ENCODE measurements at regions of chr21 and their contacts with region 1.

Region 1: GRCh38 chr21:45995686-45996179 is 14.2 kb downstream of the COL6A1 start:
- DNase-seq: peak; percentile 15 to 49
- H3K4me3 ChIP-seq: no peak overlapping the region
- H3K27ac ChIP-seq: peak overlapping the region in 1 of 2 donors; percentile 88
- H3K4me1 ChIP-seq: no peaks in the 10 kb centered on the region
- H3K27me3 ChIP-seq: no peaks in the 10 kb centered on the region
- CTCF ChIP-seq: no peak
- POLR2A ChIP-seq: no peak

Region 2: DNA sequence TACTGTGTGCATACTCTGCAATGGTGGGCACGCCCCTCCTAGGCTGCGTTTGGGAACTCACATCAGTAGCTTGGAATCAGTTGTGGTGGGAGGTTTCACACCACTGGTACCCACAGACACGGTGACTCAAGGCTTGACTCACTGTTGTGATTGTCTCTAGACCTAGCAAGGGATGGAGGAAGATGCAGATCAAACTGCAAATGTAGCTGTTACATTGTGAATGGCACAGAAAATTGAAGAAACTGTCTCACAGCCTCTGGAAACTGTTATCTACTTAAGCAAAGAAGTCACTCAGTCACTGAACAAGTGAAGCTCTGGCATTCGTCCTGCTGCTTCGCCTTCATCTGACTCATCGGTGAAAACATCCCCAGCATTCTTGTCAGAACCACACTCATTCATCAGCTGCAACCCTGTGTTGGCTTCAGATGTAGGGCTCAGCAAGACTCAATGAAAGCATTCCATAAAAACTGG is 767.5 kb before region 1 on chr21:
- intact Hi-C with region 1: no loop called
- DNase-seq: peak in 1 of 2 donors; percentile 49
- H3K4me3 ChIP-seq: no peak overlapping the region
- H3K27ac ChIP-seq: no peak overlapping the region
- H3K4me1 ChIP-seq: no peaks in the 10 kb centered on the region
- H3K27me3 ChIP-seq: no peaks in the 10 kb centered on the region
- CTCF ChIP-seq: no peak
- POLR2A ChIP-seq: no peak

Region 3: DNA sequence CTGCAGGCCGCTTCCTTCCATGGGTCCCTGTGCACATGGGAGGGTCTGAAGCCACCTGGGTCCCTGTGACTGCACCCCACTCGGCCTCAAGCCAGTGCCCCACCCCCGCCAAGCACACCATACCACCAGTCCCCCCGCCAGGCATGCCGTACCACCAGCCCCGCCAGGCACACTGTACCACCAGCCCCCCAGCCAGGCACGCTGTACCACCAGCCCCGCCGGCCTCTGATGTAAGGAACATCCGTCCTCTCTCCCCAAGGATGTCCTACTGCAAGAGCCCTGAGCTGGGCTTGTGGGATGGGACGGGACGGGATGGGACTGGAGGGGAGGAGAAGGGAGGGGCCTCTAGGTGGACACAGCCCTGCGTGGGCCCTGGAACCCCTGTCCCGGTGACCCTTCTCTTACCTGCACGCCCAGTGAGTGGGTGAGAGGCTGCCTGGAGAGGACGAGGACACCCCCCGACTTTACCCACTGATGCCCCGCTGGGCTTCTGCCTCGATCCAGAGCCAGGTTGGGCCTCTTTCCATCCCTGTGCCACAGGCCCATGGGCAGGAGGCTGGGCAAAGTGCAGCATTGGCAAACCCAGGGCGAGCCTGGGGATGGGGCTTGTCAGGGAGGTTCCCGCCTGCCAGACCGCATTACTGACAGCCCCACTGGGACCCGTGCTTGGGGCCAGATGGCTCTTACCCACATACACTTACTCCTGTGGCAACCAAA is 55.0 kb before region 1 on chr21:
- intact Hi-C with region 1: no loop called
- DNase-seq: no peak
- H3K4me3 ChIP-seq: no peak overlapping the region
- H3K27ac ChIP-seq: no peak overlapping the region
- H3K4me1 ChIP-seq: no peaks in the 10 kb centered on the region
- H3K27me3 ChIP-seq: no peaks in the 10 kb centered on the region
- CTCF ChIP-seq: no peak
- POLR2A ChIP-seq: no peak

Region 4: DNA sequence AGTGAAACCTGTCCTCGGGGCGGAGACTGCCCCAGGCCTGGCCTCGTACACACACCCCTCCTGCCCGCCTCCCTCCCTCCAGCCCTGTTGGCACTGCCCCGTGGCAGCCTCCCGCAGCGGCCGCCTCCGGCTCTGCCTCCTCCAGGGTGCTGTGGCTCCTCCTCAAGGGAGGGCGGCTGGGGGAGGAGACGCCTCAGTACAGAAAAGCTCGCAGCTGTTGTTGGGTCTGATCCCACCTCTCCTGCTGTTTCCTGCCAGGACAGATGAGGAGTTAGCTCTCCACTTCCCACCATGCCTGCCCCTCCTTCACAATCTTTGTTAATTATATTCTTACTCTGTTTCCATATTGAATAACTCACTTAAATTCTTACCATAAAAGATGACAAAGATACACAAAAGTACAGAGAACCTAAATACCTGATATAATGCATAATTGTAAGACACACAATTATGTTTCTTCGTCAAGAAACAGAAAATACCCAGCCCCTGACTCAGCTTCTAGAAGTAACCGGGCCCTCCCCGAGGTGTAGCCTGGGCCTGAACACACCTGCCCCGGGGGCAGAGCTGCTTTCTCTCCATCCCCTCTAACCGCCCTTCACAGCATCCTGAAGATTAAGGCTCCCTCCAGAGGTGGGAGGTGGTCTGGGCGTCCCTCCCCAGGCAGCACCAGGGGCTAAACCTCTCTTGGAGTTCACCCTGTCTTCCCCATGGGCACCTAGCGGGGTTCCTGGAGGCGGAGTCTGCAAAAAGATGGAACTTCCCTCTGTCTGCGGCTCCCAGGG is 44.8 kb before region 1 on chr21:
- intact Hi-C with region 1: loop called (anchors 1 kb)
- DNase-seq: peak in 1 of 2 donors; percentile 67
- H3K4me3 ChIP-seq: peak overlapping the region in 2 of 3 donors; percentile 35 to 60
- H3K27ac ChIP-seq: peak overlapping the region; percentile 48 to 91
- H3K4me1 ChIP-seq: peaks cover 3 to 12% of the 10 kb centered on the region in 2 donors
- H3K27me3 ChIP-seq: peaks cover 0 to 5% of the 10 kb centered on the region in 2 donors
- CTCF ChIP-seq: no peak
- POLR2A ChIP-seq: no peak

Region 5: DNA sequence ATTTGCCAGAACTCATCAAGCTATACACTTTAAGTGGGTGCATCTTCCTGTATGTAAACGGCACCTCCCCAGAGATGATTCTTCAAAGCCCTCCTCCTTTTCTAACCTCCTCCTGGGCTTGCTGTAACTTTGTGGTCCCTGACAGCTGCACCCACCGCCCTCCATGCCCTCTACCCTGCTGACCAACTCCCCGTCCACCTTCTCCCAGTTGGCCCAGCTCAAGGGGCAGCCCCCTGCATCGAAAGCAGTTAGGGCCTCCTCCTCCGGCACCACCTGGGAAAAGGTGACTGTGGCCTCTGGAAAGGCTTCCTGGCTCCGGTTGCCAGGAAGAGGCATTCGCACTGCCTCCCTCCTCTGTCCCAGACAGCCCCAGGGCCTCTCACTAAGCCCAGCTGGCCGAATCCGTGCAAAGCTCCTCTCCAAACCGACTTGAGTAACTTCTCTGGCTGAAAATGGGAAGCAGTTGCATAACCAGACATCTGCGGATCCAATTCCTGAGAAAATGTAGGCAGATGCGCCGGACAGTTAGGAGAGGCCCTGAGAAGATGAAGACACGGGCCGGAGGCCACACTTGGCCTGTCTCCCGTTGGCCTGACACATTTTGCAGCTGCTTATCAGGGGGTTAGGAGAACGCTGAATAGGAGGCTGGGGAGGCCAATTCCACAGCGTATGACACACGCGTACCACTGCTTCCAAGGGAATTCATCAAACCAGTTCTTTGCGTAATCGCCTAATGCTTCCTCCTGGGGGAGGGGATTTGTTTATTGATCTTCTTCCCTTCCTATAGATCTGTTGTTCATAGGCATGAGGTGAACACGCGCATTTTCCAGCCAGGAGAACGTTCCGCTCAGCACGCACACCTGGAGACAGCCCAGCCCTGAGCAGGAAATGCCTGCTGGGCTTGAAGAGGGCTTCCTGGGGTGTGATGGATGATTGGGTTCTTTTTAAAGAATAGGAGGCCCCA is 53.5 kb after region 1 on chr21:
- intact Hi-C with region 1: no loop called
- DNase-seq: peak; percentile 69 to 87
- H3K4me3 ChIP-seq: peak overlapping the region in 1 of 3 donors; percentile 41
- H3K27ac ChIP-seq: peak overlapping the region; percentile 87 to 96
- H3K4me1 ChIP-seq: peaks cover 9 to 12% of the 10 kb centered on the region in 2 donors
- H3K27me3 ChIP-seq: peaks cover 0 to 2% of the 10 kb centered on the region in 2 donors
- CTCF ChIP-seq: no peak
- POLR2A ChIP-seq: no peak

Region 6: DNA sequence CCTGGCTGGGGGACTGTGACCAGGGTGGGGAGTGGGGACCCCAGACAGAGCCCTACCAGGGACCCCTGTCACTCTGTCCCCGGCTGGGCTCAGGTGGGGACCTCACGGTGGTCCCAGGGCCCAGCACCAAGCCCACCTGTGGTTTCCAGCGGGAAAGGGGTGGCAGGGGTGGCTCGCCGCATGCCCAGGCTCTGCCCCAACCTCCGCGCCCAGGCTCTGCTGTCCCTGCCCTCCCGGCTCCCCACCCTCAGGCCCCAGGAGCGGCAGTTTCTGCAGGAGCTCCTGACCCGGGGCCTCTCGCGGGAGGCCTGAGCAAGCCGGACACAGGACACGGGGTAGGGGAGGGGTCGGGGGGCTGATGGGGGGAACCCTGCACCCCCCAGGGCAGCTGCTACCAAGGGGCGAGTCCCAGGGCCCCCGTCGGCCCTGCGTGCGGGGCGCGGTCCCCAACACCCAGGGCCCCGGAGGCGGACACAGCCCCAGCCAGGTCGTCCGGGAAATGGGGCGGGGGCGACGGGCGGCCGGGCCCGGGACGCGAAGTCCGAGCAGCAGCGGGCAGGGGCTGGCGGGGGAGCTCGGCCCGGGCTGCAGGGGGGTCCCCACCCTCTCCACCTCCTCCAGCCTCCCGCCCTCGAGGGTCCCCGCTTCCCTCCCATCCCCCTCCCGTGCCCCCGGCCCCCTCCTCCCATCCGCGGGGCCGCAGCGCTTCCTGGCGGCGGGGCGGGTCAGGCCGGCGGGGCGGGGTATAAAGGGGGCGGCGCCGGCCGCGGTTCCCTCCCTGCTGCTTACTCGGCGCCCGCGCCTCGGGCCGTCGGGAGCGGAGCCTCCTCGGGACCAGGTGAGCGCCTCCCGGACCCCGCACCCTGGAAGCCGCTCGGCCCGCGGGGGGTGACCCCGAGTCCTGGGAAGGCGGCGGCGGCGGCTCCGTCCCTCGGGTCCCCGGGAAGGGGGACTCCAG is 101.9 kb after region 1 on chr21 and contains the start of gene COL6A2:
- intact Hi-C with region 1: loop called (anchors 10 kb)
- DNase-seq: peak; percentile 59 to 60
- H3K4me3 ChIP-seq: peak within 1 kb of the TSS; percentile 84 to 96 (median 89)
- H3K27ac ChIP-seq: peak within 1 kb of the TSS; percentile 86 to 97
- H3K4me1 ChIP-seq: no peaks in the 10 kb centered on the region
- H3K27me3 ChIP-seq: peaks cover 0 to 2% of the 10 kb centered on the region in 2 donors
- CTCF ChIP-seq: no peak
- POLR2A ChIP-seq: no peak
- total RNA-seq, gene COL6A2: 177 to 1,266 (median 418) TPM

Region 7: DNA sequence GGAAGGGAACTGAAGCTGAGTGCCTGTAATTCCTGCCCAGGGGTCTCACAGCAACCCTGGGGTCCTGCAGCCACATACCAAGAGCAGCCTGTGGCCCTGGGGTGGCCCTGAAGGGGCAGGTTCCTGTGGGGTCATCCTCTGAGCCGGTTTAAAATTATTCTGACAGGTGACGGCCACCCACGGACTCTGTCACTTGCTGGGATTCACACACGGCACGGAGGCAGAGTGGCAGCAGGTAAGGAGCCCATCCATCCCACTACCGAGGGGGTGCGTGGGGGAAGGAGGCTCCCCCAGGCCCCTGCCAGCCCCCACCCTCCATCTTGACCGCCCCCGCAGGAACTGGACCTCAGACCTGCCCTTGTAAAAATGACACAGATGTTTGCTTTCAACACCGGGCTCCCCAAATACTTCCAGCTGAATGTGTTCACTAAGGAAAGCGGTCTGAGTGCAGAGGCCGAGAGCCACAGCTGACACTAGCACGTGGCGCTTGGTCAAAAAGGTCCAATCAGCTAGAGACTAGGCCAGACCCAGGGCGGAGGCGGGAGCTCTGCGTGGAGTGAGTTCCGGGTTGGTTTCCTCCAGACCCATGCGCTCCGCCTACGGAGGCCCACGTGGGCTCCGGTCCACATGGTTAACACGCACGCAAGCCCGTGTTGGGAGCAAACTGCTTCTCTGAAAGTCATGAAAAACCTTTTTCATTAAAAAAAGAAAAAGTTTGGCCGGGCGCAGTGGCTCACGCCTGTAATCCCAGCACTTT is 300.4 kb after region 1 on chr21:
- intact Hi-C with region 1: no loop called
- DNase-seq: peak; percentile 61 to 67
- H3K4me3 ChIP-seq: peak overlapping the region; percentile 38 to 71 (median 52)
- H3K27ac ChIP-seq: peak overlapping the region; percentile 30 to 88
- H3K4me1 ChIP-seq: peaks cover 0 to 4% of the 10 kb centered on the region in 2 donors
- H3K27me3 ChIP-seq: no peaks in the 10 kb centered on the region
- CTCF ChIP-seq: no peak
- POLR2A ChIP-seq: no peak

Measured in breast epithelium (tissue), 4 donors.